ENCODE measurements at regions of chrX and their contacts with region 1.

Region 1: DNA sequence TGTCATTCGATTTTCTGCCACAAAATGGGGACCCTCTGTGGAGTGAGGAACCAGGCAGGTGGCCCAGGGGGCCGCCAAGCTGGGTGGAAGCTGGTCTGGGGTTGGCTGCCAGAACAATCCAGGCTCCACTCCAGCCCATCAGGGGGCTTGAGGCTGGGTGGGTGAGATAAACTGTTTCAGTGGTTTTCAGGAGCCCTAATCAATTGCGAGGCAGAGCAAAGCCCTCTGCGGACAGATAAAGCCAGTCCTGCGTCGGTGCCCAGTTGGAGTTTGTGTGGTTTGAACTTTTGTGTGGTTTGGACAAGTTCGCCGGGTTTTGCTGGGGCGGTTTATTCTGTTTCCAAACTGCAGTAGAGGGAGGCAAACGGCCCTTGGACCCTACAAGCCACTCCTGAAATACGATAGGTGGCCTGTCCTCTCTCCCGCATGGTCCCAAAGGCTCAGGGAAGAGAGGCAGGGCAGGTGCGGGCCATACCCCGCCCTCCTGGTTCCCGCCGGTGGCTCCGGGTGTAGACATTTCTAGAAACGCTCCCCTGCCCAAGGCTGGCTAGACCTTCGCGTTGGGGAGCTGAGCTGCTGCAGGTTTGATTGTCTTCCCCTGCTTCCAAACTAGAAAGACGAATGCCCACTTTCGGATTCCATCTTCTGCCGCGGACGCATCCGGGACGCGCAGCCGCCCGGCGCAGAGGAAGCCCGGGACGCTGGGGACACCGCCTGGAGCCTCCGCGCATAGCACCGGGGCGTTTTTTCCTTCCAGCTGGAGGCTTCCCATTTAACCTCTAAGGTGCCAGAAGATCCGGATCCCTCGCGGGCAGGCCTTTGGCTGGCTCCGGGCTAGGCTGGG is 169.0 kb upstream of the BCOR start:
- DNase-seq: peak; percentile 39 to 75 (median 53)
- H3K4me3 ChIP-seq: peak overlapping the region; percentile 16 to 75 (median 56)
- H3K27ac ChIP-seq: peak overlapping the region in 44 of 59 donors; percentile 9 to 80 (median 54)
- H3K27me3 ChIP-seq: peaks cover 0 to 74% (median 19%) of the 10 kb centered on the region in 45 donors
- CTCF ChIP-seq: peak; percentile 11 to 76 (median 62)

Region 2: DNA sequence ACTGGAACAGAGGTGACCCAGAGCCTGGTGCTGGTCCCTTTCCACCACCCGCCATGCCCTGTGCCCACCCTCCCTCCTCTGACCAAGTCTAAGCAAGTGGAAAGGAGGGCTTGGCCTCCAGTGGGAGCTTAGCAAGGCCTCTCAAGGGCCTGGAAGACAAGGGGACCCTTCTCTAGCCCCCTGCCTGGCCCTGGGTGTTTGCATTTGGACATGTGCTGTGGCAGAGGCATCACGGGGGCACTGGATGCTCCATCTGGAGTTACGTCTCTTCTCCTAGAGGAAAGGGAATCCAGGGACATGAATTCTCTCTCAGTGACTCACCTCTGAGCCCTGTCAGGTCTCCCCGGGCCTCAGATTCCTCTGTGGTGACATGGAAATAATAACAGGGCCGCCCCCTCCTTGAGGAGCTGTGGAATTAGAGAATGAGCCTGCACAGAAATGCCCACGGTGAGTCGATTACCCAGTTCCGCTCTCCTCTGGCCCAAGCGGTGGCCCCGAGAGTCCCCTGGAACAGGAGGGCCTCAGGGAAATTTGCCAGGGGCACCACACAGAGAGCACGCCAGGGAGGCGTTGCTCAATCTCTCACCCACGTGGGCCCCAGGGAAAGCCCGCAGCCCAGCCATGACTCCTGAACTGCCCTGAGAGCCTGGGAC is 358.6 kb before region 1 on chrX:
- intact Hi-C with region 1: loop called in 1 of 2 experiments (anchors 10 kb)
- DNase-seq: peak in 1 of 10 donors; percentile 42
- H3K4me3 ChIP-seq: no peak overlapping the region
- H3K27ac ChIP-seq: no peak overlapping the region
- H3K27me3 ChIP-seq: peaks cover 0 to 86% (median 13%) of the 10 kb centered on the region in 45 donors
- CTCF ChIP-seq: no peak

Region 3: GRCh38 chrX:40108959-40109287 is 157.8 kb before region 1 on chrX:
- intact Hi-C with region 1: loop called (anchors 5 kb)
- DNase-seq: peak in 7 of 10 donors; percentile 54 to 81 (median 59)
- H3K4me3 ChIP-seq: peak overlapping the region; percentile 12 to 75 (median 58)
- H3K27ac ChIP-seq: peak overlapping the region in 56 of 59 donors; percentile 38 to 92 (median 82)
- H3K27me3 ChIP-seq: peaks cover 0 to 94% (median 49%) of the 10 kb centered on the region in 45 donors
- CTCF ChIP-seq: peak in 1 of 56 donors; percentile 18

Region 4: GRCh38 chrX:40169193-40170101 is 97.3 kb before region 1 on chrX:
- intact Hi-C with region 1: loop called in 1 of 2 experiments (anchors 5 kb)
- DNase-seq: peak in 2 of 10 donors; percentile 29 to 44
- H3K4me3 ChIP-seq: no peak overlapping the region
- H3K27ac ChIP-seq: peak overlapping the region in 1 of 59 donors; percentile 14
- H3K27me3 ChIP-seq: peaks cover 0 to 100% (median 74%) of the 10 kb centered on the region in 45 donors
- CTCF ChIP-seq: peak in 16 of 56 donors; percentile 5 to 39 (median 19)

Region 5: DNA sequence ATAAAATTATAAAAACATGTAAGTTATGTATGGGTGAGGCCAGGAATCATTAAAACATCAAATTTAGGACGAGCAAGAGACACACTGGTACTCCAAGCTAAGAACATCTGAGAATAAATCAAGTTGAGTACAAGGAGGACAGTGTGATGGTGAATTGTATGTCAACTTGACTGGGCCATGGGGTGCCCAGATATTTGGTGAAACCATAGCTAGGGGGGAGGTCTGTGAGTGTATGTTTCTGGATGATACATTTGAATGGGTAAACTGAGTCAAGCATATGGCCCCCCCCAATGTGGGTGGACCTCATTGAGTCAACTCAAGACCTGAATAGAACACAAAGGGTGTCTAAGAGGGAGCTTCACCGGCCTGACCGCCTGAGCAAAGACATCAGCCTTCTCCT is 53.6 kb before region 1 on chrX:
- intact Hi-C with region 1: no loop called
- DNase-seq: no peak
- H3K4me3 ChIP-seq: no peak overlapping the region
- H3K27ac ChIP-seq: no peak overlapping the region
- H3K27me3 ChIP-seq: peaks cover 0 to 28% (median 0%) of the 10 kb centered on the region in 45 donors
- CTCF ChIP-seq: no peak

Region 6: DNA sequence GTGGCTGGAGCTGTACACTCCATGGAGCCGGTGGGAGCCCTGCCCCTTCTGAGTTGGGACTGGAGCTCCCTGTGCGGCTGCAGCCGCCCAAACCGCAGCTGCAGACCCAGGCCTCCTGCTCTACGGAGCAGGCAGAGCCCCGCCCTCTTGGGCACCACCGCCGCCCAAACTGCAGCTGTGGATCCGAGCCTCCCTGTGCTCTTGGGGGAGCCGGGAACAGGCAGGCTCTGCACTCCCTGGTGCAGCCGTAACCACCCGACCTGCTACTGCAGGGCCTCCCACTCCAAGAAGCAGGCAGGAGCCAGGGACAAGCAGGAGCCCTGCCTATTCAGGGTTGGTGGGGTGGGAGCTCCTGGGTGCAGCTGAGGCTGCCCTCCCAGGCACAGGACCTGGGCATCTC is 76.6 kb after region 1 on chrX:
- intact Hi-C with region 1: no loop called
- DNase-seq: no peak
- H3K4me3 ChIP-seq: no peak overlapping the region
- H3K27ac ChIP-seq: no peak overlapping the region
- H3K27me3 ChIP-seq: peaks cover 0 to 41% (median 8%) of the 10 kb centered on the region in 45 donors
- CTCF ChIP-seq: no peak